ENCODE measurements at regions of chr6 and their contacts with region 1.

Region 1: DNA sequence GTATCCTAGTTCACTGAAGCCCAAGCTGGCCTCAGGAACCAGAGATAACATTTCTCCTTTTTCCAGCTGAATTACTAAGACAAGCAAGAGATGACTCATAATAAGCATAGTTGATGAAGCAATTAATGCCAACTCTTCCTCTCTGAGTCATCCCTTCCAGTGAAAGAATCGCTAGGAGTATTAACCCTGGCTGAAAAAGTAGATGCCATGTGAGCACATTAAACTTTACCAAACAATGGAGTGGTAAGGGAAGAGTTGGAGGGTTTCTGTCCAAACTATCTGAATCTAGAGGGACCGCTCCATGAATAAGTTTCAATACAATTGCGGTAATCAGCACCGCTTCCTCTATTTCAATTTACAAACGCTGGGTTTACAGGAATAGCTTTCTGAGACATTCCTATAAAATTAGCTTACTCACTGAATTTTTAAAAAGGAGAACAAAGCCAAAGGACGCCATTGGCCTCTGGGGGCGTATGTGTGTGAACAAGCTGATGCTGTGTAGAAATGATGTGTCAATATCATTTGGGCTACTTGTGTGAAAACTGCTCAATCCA is 48.3 kb downstream of the ATXN1 start:
- DNase-seq: peak; percentile 92
- ATAC-seq: peak; percentile 64
- H3K4me3 ChIP-seq: peak overlapping the region; percentile 64
- H3K27ac ChIP-seq: peak overlapping the region; percentile 98
- H3K4me1 ChIP-seq: peaks cover 33% of the 10 kb centered on the region
- H3K27me3 ChIP-seq: no peaks in the 10 kb centered on the region
- CTCF ChIP-seq: peak; percentile 72

Region 2: DNA sequence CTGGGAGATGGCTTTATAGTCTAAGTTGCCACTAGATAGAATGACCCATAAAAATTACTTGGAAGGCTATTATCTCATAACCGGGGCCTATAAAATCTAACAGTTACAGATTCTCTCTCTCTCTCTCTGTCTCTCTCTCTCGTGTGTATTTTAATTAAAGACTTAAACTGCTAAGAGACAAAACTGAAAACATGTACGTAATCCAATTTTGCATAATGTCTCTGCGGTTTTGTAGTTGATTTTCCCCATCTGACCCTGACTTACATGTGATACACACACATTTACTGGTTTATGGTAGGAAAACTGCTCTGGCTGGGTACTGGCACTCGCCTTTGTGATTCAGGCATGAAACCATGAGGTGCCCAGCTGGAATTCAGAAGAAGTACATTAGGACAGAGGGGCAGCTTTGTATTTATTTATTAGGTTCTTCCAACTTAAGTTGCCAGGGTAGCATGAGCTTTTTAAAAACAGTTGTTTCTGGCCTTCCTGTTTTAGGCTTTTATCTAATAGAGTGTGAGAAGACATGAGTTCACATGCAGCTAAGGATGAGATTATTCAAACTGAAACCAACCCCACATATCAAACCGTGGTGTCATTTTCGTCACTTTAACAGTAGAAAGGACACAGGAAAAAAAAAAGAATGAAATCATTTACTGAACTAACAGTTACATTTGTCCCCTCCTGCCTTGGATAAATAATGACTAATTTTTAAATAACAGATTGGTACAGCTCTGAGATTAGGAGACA is 292.1 kb before region 1 on chr6:
- CTCF ChIA-PET with region 1: no interaction called
- POLR2A ChIA-PET with region 1: no interaction called
- intact Hi-C with region 1: loop called (anchors 5 kb)
- DNase-seq: peak; percentile 43
- ATAC-seq: peak; percentile 73
- H3K4me3 ChIP-seq: peak overlapping the region; percentile 43; the same call in 1 of the 2 replicates
- H3K27ac ChIP-seq: peak overlapping the region; percentile 46
- H3K4me1 ChIP-seq: peaks cover 14% of the 10 kb centered on the region
- H3K27me3 ChIP-seq: no peaks in the 10 kb centered on the region
- CTCF ChIP-seq: no peak

Region 3: DNA sequence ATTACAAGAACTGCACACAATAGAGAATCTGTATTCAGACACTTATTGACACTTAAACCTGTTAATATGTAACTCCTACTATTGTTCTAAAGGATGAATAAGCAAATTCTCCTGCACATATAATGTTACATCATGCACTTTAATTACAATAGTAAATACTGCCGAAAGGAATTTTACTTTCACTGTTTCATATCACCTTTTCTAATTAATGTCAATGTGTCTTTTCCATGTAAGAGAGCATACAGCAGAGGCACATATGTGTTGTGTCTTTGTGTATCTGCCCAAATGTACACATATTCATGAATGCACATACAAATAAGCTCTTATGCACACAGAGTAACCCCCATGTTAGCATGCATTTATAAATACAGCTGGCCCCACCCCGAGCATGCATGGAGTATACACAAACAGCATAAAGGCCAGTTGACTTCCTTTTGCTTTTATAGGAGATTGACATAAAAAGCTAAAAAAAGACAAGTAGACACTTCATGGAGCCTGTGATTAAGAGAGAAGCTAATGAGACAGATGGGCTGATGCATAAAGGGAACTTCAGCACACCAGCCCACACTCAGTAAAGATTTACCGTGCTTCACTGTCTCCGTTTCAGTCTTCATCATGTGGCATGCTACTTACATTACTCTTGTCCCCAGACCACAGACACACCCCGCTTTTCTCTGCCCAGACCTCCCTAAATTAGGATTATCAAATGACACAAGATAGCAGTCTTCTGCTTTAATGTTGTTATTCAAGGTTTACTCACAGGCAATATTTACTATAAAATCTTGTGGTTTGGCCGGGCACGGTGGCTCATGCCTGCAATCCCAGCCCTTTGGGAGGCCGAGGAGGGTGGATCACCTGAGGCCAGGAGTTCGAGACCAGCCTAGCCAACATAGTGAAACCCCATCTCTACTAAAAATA is 136.3 kb before region 1 on chr6:
- CTCF ChIA-PET with region 1: no interaction called
- POLR2A ChIA-PET with region 1: no interaction called
- intact Hi-C with region 1: loop called (anchors 5 kb)
- DNase-seq: peak; percentile 78
- ATAC-seq: peak; percentile 93
- H3K4me3 ChIP-seq: peak overlapping the region; percentile 8; the same call in 1 of the 2 replicates
- H3K27ac ChIP-seq: peak overlapping the region; percentile 36
- H3K4me1 ChIP-seq: peaks cover 16% of the 10 kb centered on the region
- H3K27me3 ChIP-seq: no peaks in the 10 kb centered on the region
- CTCF ChIP-seq: no peak

Region 4: GRCh38 chr6:16669227-16669626 is 43.8 kb before region 1 on chr6:
- CTCF ChIA-PET with region 1: no interaction called
- POLR2A ChIA-PET with region 1: no interaction called
- intact Hi-C with region 1: loop called (anchors 2 kb)
- DNase-seq: peak; percentile 93
- ATAC-seq: peak; percentile 86
- H3K4me3 ChIP-seq: no peak overlapping the region
- H3K27ac ChIP-seq: peak overlapping the region; percentile 82
- H3K4me1 ChIP-seq: peaks cover 42% of the 10 kb centered on the region
- H3K27me3 ChIP-seq: no peaks in the 10 kb centered on the region
- CTCF ChIP-seq: no peak

Region 5: GRCh38 chr6:16731478-16732051 is 18.6 kb after region 1 on chr6:
- CTCF ChIA-PET with region 1: no interaction called
- POLR2A ChIA-PET with region 1: no interaction called
- intact Hi-C with region 1: loop called (anchors 2 kb)
- DNase-seq: peak; percentile 30
- ATAC-seq: peak; percentile 51
- H3K4me3 ChIP-seq: no peak overlapping the region
- H3K27ac ChIP-seq: 0 out of 2 replicates have a peak overlapping the region, but pooled peaks have one; percentile 4
- H3K4me1 ChIP-seq: peaks cover 57% of the 10 kb centered on the region
- H3K27me3 ChIP-seq: no peaks in the 10 kb centered on the region
- CTCF ChIP-seq: no peak

Region 6: GRCh38 chr6:16761471-16762267 is 48.7 kb after region 1 on chr6:
- CTCF ChIA-PET with region 1: interaction called, 18 read pairs
- POLR2A ChIA-PET with region 1: interaction called, 11 read pairs
- intact Hi-C with region 1: loop called (anchors 1 kb)
- DNase-seq: peak; percentile 89
- ATAC-seq: peak; percentile 27
- H3K4me3 ChIP-seq: peak overlapping the region; percentile 95
- H3K27ac ChIP-seq: peak overlapping the region; percentile 97
- H3K4me1 ChIP-seq: peaks cover 50% of the 10 kb centered on the region
- H3K27me3 ChIP-seq: no peaks in the 10 kb centered on the region
- CTCF ChIP-seq: no peak